Heart right ventricle (tissue), 16 donors: ENCODE measurements at regions of chr11 and their contacts with region 1.

Region 1: GRCh38 chr11:46786110-46786509 is 60.0 kb downstream of the CKAP5 start:
- DNase-seq: no peak
- ATAC-seq: no peak
- H3K4me3 ChIP-seq: no peak overlapping the region
- H3K27ac ChIP-seq: no peak overlapping the region
- H3K4me1 ChIP-seq: no peaks in the 10 kb centered on the region
- H3K27me3 ChIP-seq: no peaks in the 10 kb centered on the region
- CTCF ChIP-seq: no peak

Region 2: DNA sequence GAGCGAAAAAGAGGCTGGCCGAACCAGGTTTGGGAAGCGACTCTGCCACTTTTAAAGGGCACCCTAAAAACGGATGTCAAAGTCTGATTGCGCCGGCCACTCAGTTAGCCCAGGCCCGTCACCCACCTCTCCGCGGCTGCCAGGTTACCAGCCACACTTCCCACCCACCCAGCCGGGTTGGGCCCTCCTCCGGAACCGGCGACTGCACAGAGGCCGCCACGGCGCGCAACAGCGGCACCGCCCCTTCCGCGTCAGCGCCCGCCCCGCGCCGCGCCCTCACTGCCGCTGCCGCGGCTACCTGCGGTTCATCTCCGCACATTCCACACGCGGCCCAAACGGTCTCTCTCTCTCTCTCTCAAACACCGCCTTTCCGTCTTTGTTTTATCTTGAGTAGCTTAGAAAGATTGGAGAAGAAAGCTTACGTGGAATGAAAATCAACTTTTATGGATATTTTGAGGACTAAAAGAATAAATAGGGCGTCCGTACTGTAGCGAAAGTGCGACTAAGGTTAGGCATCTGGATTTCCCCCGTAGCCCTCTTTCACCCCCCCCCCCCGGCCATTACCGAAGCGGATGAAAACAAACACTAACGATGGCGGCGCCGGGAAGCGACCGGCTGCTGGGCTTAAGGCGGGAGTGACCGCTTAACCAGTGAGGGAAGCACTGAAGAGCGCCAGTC is 169.0 kb before region 1 on chr11 and contains the starts of genes ATG13 and HARBI1:
- intact Hi-C with region 1: no loop called
- DNase-seq: peak; percentile 89 to 91
- ATAC-seq: peak; percentile 98 to 99 (median 99)
- H3K4me3 ChIP-seq: peak within 1 kb of the TSS; percentile 74 to 100 (median 98)
- H3K27ac ChIP-seq: peak within 1 kb of the TSS; percentile 77 to 98 (median 94)
- H3K4me1 ChIP-seq: peaks cover 0 to 63% (median 39%) of the 10 kb centered on the region in 9 donors
- H3K27me3 ChIP-seq: no peaks in the 10 kb centered on the region
- CTCF ChIP-seq: no peak
- total RNA-seq, gene ATG13: 35.7 to 50.6 (median 42.5) TPM
- total RNA-seq, gene HARBI1: 2.6 to 4.4 (median 3.2) TPM

Region 3: GRCh38 chr11:46750126-46750525 is 36.0 kb before region 1 on chr11:
- intact Hi-C with region 1: loop called in 1 of 10 experiments (anchors 5 kb)
- DNase-seq: no peak
- ATAC-seq: no peak
- H3K4me3 ChIP-seq: no peak overlapping the region
- H3K27ac ChIP-seq: no peak overlapping the region
- H3K4me1 ChIP-seq: no peaks in the 10 kb centered on the region
- H3K27me3 ChIP-seq: no peaks in the 10 kb centered on the region
- CTCF ChIP-seq: no peak